GM10248 (cell line): ENCODE measurements at regions of chr6 and their contacts with region 1.

Region 1: DNA sequence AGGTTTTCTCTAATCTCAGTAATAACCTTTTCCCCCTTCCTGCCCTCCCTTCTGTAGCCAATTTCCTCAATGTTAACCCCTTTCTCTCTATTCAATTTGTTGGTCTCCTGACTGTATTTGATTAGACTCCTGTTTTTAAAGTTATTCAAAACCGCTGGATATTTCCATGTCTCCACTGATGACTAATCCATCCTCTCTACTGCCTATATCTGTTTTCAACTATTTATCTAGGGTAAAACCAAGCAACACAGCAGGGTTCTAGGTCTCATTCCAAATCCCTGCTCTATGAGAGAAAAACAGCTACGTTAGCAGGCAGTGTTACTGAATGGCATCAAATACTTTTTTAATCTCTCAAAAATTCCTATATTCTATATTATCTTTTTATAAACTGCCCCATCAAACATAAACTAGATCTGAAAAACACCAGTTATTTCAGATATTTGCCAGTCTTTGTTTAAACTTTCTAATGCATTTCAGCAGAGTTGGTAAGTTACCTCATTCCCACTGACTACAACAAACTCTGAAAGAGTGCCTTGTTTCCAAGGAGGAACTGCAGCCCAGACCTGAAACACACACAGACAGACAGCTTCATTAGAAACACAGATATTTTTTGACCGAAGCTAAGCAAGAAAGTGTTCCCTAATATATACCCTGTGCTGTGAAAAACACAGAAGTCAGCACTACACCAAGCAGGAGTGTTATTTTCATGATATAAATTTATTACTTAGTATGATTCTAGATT is 8.2 kb downstream of the RTN4IP1 start:
- DNase-seq: no peak
- CTCF ChIP-seq: no peak

Region 2: GRCh38 chr6:106608062-106608668 is 12.9 kb before region 1 on chr6:
- CTCF ChIA-PET with region 1: interaction called, 18 read pairs
- POLR2A ChIA-PET with region 1: no interaction called
- DNase-seq: peak; percentile 51
- CTCF ChIP-seq: peak; percentile 78

Region 3: GRCh38 chr6:106637717-106638341 is 16.7 kb after region 1 on chr6:
- CTCF ChIA-PET with region 1: interaction called, 14 read pairs
- POLR2A ChIA-PET with region 1: no interaction called
- DNase-seq: peak; percentile 48
- CTCF ChIP-seq: no peak

Region 4: DNA sequence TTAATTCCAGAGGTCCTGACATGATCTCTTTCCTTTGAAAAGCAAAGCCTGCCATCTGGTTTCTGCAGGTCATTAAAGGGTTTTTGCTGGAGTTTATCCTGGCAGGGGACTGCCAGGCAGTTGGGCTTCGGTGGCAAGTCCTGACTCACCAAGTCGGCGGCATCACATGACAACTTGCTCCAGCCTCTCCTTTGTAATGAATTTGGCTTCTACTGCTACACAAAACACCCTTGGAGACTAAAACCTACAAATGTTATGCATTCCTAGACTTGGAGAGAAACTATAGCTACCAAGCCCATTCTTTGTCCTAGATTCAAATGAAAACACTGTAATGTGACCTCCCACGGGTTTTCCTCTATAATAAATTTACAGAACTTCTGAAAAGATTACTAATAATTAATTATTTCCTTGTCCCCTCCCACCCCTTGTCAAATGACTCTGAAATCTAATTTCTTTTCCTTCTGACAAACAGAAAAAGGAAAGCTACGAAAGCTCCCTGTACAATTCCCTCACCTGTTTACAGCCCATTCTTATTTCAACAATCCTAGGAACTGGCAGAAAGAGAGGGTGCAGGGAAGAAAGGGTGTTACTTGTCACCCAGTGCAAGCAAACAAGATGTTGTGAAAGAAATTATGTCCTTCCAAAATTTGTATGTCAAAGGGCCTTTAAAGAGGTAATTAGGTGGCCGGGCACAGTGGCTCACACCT is 71.2 kb after region 1 on chr6:
- CTCF ChIA-PET with region 1: no interaction called
- POLR2A ChIA-PET with region 1: no interaction called
- DNase-seq: no peak
- CTCF ChIP-seq: no peak

Region 5: DNA sequence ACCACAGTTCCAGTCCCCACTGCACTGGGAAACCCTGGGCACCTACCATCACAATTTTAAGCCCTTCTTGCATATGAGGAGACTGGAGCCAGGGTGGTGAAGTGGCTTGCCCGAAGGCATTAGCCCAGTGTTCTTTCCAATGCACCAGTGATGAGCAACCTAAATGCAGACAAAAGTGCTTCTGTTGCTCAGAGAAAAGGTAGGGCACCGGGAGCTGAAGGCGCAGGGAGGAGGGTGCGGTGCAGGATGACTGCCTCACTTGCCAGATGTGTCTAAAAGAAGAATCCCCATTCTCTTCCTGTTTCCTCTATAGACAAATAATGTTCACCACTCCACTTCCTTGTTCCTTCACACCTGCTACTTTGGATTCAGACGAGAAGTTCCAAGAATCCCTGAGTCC is 94.8 kb after region 1 on chr6:
- CTCF ChIA-PET with region 1: no interaction called
- POLR2A ChIA-PET with region 1: no interaction called
- DNase-seq: no peak
- CTCF ChIP-seq: no peak

Region 6: GRCh38 chr6:107075951-107076381 is 454.9 kb after region 1 on chr6:
- CTCF ChIA-PET with region 1: no interaction called
- POLR2A ChIA-PET with region 1: no interaction called
- DNase-seq: peak; percentile 41
- CTCF ChIP-seq: peak; percentile 37